Activated B cell treated with CpG ODN at 0.5 μM for 24 hours (primary cell): ENCODE measurements at regions of chr15 and their contacts with region 1.

Region 1: DNA sequence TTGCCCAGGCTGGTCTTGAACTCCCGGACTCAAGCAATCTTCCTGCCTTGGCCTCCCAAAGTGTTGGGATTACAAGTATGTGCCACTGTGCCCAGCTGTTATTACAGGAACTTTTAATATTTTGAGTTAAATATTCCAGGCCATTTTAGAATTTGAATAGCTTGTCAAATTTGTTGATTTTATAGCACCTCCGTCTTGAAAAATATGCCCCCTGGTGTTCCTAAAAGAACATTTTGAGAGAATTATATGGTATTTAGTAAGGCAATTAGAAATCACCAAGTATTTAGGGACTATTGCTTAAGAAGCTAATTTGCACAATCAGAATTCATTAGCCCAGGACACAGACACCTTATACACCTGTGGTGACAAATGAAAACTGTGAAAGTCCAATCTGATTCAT is 23.7 kb downstream of the PDE8A start:
- DNase-seq: no peak
- ATAC-seq: no peak
- H3K4me3 Mint-ChIP-seq: no peak overlapping the region
- H3K27ac Mint-ChIP-seq: no peak overlapping the region
- H3K4me1 Mint-ChIP-seq: peaks cover 67% of the 10 kb centered on the region
- H3K27me3 Mint-ChIP-seq: no peaks in the 10 kb centered on the region
- CTCF ChIP-seq: no peak

Region 2: GRCh38 chr15:84658080-84658787 is 347.1 kb before region 1 on chr15 and contains the start of gene NMB:
- CTCF ChIA-PET with region 1: no interaction called
- POLR2A ChIA-PET with region 1: no interaction called
- intact Hi-C with region 1: no loop called
- DNase-seq: peak; percentile 83
- ATAC-seq: peak; percentile 76
- H3K4me3 Mint-ChIP-seq: peak within 1 kb of the TSS; percentile 83
- H3K27ac Mint-ChIP-seq: peak within 1 kb of the TSS; percentile 88
- H3K4me1 Mint-ChIP-seq: peaks cover 41% of the 10 kb centered on the region
- H3K27me3 Mint-ChIP-seq: no peaks in the 10 kb centered on the region
- CTCF ChIP-seq: no peak
- total RNA-seq, gene NMB: 2.9 and 3.8 TPM in 2 replicates

Region 3: GRCh38 chr15:84992157-84992944 is 13.0 kb before region 1 on chr15:
- CTCF ChIA-PET with region 1: interaction called, 4 read pairs
- POLR2A ChIA-PET with region 1: interaction called, 3 read pairs
- intact Hi-C with region 1: loop called (anchors 1 kb)
- DNase-seq: no peak
- ATAC-seq: peak; percentile 33
- H3K4me3 Mint-ChIP-seq: no peak overlapping the region
- H3K27ac Mint-ChIP-seq: peak overlapping the region; percentile 60
- H3K4me1 Mint-ChIP-seq: peaks cover 48% of the 10 kb centered on the region
- H3K27me3 Mint-ChIP-seq: no peaks in the 10 kb centered on the region
- CTCF ChIP-seq: no peak

Region 4: DNA sequence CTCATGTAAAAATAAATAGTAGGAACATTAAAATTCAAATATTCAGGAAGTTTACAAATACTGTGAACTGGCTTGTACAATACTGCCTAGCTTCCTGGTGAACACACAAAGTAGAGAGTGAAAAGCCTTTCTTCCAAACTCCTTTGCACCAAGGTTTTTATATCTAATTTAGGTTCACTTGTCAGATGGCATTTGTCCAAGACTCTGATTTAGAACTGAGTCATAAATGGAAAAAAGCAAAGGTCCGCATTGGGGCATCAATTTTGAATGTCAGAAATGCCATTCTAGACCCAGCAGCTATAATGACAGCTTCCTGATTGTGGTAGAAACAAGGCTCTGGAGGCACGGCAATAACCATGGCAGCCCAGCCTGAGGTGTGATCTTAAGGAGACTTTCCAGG is 137.0 kb after region 1 on chr15:
- CTCF ChIA-PET with region 1: no interaction called
- POLR2A ChIA-PET with region 1: no interaction called
- intact Hi-C with region 1: no loop called
- DNase-seq: no peak
- ATAC-seq: no peak
- H3K4me3 Mint-ChIP-seq: no peak overlapping the region
- H3K27ac Mint-ChIP-seq: no peak overlapping the region
- H3K4me1 Mint-ChIP-seq: no peaks in the 10 kb centered on the region
- H3K27me3 Mint-ChIP-seq: peaks cover 4% of the 10 kb centered on the region
- CTCF ChIP-seq: no peak